ENCODE measurements at regions of chr14 and their contacts with region 1.

Region 1: DNA sequence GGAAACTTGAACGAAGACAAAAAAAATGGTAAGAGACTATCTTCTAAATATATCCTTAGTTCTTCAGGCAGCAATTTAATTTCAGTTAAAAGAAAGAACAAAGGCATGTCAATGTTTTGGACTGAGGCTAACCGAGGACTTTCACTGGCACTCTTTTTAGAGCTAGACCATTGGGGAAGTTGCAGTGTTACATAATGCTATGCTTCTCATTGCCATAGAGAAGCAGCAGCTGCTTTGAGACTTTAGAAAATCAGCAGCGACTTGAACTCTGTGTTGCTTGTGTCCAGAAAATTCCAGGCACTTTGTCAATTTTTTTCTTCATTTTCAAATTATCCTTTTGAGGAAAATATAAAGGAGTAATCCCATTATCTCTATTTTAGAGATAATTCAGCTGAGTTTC is 964.2 kb downstream of the NRXN3 start:
- DNase-seq: no peak
- H3K4me3 Mint-ChIP-seq: no peak overlapping the region
- H3K27ac Mint-ChIP-seq: no peak overlapping the region
- H3K4me1 Mint-ChIP-seq: no peaks in the 10 kb centered on the region
- H3K27me3 Mint-ChIP-seq: no peaks in the 10 kb centered on the region

Region 2: GRCh38 chr14:79077094-79077493 is 57.3 kb before region 1 on chr14:
- intact Hi-C with region 1: no loop called
- DNase-seq: no peak
- H3K4me3 Mint-ChIP-seq: no peak overlapping the region
- H3K27ac Mint-ChIP-seq: no peak overlapping the region
- H3K4me1 Mint-ChIP-seq: no peaks in the 10 kb centered on the region
- H3K27me3 Mint-ChIP-seq: no peaks in the 10 kb centered on the region

Region 3: DNA sequence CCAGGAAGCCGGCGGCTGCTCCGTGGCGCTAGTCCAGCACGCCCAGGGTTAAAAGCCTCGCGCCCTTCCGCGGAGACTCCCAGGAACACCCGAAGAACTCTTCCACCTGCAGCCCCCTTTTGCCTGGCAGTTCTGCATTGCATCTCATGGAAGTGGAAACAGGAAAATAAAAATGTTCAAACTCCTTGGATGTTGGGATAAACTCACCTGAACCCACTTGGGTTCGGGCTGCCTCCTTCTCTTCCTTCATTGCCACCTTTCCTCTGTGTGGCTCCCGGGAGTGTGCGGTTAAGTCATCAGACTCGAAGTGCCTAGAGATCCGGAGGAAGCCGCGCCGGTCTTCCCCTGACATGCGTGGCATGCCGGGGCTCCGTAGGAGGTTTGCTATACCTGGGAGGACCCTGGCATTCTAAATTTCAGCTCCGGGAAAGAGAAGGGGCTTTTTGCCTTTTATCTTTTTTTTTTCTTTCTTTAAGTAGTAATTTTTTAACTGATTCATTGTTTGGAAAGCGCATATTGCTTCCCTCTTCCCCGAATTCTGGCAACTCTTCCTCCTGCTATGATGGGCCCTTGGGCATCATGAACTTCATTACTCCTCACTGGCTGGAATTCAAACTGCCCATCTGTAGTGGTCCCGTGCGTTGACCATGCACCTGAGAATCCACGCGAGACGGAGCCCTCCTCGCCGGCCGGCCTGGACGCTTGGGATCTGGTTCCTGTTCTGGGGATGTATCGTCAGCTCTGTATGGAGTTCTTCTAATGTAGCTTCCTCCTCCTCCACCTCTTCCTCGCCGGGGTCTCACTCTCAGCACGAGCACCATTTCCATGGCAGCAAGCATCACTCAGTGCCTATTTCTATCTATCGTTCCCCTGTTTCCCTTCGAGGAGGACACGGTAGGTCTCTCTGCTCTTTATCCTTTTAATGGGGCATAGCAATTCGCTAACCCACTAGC is 145.6 kb after region 1 on chr14:
- intact Hi-C with region 1: loop called (anchors 10 kb)
- DNase-seq: no peak
- H3K4me3 Mint-ChIP-seq: peak overlapping the region; percentile 4
- H3K27ac Mint-ChIP-seq: no peak overlapping the region
- H3K4me1 Mint-ChIP-seq: no peaks in the 10 kb centered on the region
- H3K27me3 Mint-ChIP-seq: peaks cover 31% of the 10 kb centered on the region

Measured in activated T-helper 2 cell treated with anti-CD3 and anti-CD28 coated beads, Interferon-gamma antibody, Interleukin-2, Interleukin-4, amounts not matched to agents 10 μg/mL and 5 μg/mL and 100 μg/mL, durations not matched to agents 14 hours and 24 hours and 36 hours (primary cell).